ENCODE measurements at regions of chr17 and their contacts with region 1.

Region 1: DNA sequence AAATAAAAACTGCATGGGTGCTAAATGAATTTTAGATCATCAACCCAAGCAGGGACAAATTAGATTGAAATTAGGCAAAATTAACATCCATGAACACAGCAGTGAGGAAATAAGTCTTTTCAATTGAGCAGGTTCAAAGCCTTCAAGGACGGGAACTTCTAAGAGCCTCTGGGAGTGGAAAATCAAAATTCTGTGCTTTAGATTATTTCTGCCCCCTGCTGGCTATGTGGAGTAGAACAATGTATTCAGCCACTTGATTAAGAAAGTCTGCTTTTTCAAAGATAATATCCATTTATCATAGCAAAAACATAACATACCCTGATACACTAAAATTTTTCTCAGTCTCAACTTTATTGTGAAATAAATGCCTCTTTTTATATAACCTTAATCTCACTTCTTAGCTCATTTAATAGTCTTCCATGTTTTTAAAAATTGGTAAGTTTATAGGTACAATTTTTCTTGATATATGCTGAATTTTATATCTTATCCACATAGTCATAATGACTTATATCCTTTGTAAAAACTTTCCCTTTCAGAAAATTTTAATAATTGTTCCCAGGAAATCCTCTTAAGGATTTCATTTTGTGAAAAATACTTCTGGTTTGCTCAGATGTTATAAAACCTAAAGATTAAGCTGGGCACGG is 28.1 kb upstream of the NOL11 start:
- DNase-seq: peak in 2 of 5 donors; percentile 25 to 41
- ATAC-seq: peak in 3 of 4 donors; percentile 52 to 66 (median 58)
- H3K4me3 ChIP-seq: no peak overlapping the region
- H3K27ac ChIP-seq: no peak overlapping the region
- H3K4me1 ChIP-seq: peaks cover 0 to 6% (median 0%) of the 10 kb centered on the region in 12 donors
- H3K27me3 ChIP-seq: no peaks in the 10 kb centered on the region
- CTCF ChIP-seq: peak; percentile 67 to 86 (median 82)
- POLR2A ChIP-seq: no peak

Region 2: GRCh38 chr17:67637917-67638641 is 51.6 kb before region 1 on chr17:
- intact Hi-C with region 1: loop called in 1 of 10 experiments (anchors 5 kb)
- DNase-seq: no peak
- ATAC-seq: no peak
- H3K4me3 ChIP-seq: no peak overlapping the region
- H3K27ac ChIP-seq: no peak overlapping the region
- H3K4me1 ChIP-seq: peaks cover 0 to 27% (median 9%) of the 10 kb centered on the region in 12 donors
- H3K27me3 ChIP-seq: no peaks in the 10 kb centered on the region
- CTCF ChIP-seq: no peak
- POLR2A ChIP-seq: no peak

Measured in heart left ventricle (tissue), 16 donors.